SK-N-SH (cell line): ENCODE measurements at regions of chr5 and their contacts with region 1.

Region 1: DNA sequence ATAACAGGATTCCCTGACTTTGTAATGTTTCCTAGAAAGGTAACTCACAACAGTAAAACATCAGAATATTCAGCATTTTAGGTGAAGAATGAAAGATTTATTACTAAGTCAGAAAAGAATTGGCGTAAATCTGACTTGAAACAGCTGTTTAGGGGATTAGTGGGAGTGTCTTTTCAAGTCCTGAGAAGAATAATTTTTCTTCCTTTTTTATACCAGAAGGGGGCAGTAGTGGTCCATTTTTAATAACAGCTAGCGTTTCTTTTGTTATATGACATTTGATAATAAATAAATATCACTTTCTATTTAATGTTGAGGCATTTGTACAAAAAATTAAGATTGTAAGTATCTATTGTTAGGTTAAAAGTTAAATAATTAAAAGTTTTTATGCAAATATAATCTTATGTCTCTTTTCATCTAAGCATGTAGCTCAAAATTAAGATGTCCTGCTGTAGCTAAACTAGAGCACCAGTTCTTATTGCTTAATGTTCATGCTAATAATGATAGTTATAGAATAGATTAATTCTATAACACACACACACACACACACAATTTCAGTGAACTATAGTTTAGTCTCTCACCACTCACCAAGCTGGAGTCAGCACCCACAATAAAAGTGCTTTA is 258.7 kb upstream of the ARRDC3 start:
- DNase-seq: peak; percentile 22
- H3K4me3 ChIP-seq: no peak overlapping the region; a peak in 1 of 4 replicates
- H3K27ac ChIP-seq: no peak overlapping the region
- H3K4me1 ChIP-seq: peaks cover 0 to 6% of the 10 kb centered on the region in 2 experiments; a peak in 2 of 4 replicates
- H3K27me3 ChIP-seq: no peaks in the 10 kb centered on the region
- CTCF ChIP-seq: peak; percentile 75
- EP300 ChIP-seq: no peak
- RAD21 ChIP-seq: peak; percentile 72

Region 2: GRCh38 chr5:91403438-91403837 is 238.4 kb before region 1 on chr5:
- CTCF ChIA-PET with region 1: no interaction called
- POLR2A ChIA-PET with region 1: no interaction called
- DNase-seq: no peak
- H3K4me3 ChIP-seq: no peak overlapping the region
- H3K27ac ChIP-seq: peak overlapping the region in 1 of 2 experiments; percentile 34; a peak in 1 of 4 replicates
- H3K4me1 ChIP-seq: no peaks in the 10 kb centered on the region; a peak in 1 of 4 replicates
- H3K27me3 ChIP-seq: no peaks in the 10 kb centered on the region
- CTCF ChIP-seq: no peak
- EP300 ChIP-seq: no peak
- RAD21 ChIP-seq: no peak

Region 3: GRCh38 chr5:91499943-91500531 is 141.8 kb before region 1 on chr5:
- CTCF ChIA-PET with region 1: interaction called, 10 read pairs
- POLR2A ChIA-PET with region 1: no interaction called
- DNase-seq: peak; percentile 44
- H3K4me3 ChIP-seq: no peak overlapping the region
- H3K27ac ChIP-seq: no peak overlapping the region
- H3K4me1 ChIP-seq: peaks cover 0 to 9% of the 10 kb centered on the region in 2 experiments; a peak in 2 of 4 replicates
- H3K27me3 ChIP-seq: no peaks in the 10 kb centered on the region
- CTCF ChIP-seq: peak; percentile 80
- EP300 ChIP-seq: no peak
- RAD21 ChIP-seq: peak; percentile 90

Region 4: DNA sequence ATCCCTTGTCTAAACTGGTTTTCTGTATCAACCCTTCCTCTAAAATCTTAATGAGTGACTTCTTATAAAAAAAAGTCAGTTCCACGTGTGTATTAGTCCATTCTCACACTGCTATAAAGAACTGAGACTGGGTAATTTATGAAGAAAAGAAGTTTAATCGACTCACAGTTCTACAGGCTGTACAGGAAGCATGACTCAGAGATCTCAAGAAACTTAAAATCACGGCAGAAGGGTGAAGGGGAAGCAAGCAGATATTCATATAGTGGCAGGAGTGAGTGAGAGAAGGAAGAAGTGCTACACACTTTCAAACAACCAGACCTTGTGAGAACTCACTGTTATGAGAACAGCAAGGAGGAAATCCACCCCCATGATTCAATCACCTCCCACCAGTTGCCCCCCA is 49.1 kb after region 1 on chr5:
- CTCF ChIA-PET with region 1: no interaction called
- POLR2A ChIA-PET with region 1: no interaction called
- DNase-seq: no peak
- H3K4me3 ChIP-seq: no peak overlapping the region
- H3K27ac ChIP-seq: no peak overlapping the region
- H3K4me1 ChIP-seq: no peaks in the 10 kb centered on the region
- H3K27me3 ChIP-seq: no peaks in the 10 kb centered on the region
- CTCF ChIP-seq: no peak
- EP300 ChIP-seq: no peak
- RAD21 ChIP-seq: no peak